ENCODE measurements at regions of chr16 and their contacts with region 1.

Region 1: GRCh38 chr16:89368604-89369249 is 121.6 kb downstream of the ANKRD11 start:
- DNase-seq: no peak
- H3K4me3 ChIP-seq: no peak overlapping the region
- H3K4me3 Mint-ChIP-seq: no peak overlapping the region
- H3K27ac Mint-ChIP-seq: peak overlapping the region; percentile 42
- H3K4me1 ChIP-seq: peaks cover 46% of the 10 kb centered on the region
- H3K4me1 Mint-ChIP-seq: peaks cover 70% of the 10 kb centered on the region
- H3K27me3 ChIP-seq: no peaks in the 10 kb centered on the region
- H3K27me3 Mint-ChIP-seq: no peaks in the 10 kb centered on the region
- CTCF ChIP-seq: no peak

Region 2: GRCh38 chr16:89357055-89357816 is 11.5 kb before region 1 on chr16:
- CTCF ChIA-PET with region 1: no interaction called
- POLR2A ChIA-PET with region 1: interaction called, 11 read pairs
- intact Hi-C with region 1: no loop called
- DNase-seq: peak in 1 of 2 experiments; percentile 39
- H3K4me3 ChIP-seq: no peak overlapping the region
- H3K4me3 Mint-ChIP-seq: no peak overlapping the region
- H3K27ac Mint-ChIP-seq: no peak overlapping the region
- H3K4me1 ChIP-seq: peaks cover 43% of the 10 kb centered on the region
- H3K4me1 Mint-ChIP-seq: peaks cover 52% of the 10 kb centered on the region
- H3K27me3 ChIP-seq: no peaks in the 10 kb centered on the region
- H3K27me3 Mint-ChIP-seq: no peaks in the 10 kb centered on the region
- CTCF ChIP-seq: peak in 1 of 2 experiments; percentile 46

Region 3: GRCh38 chr16:89422905-89423630 is 54.3 kb after region 1 on chr16:
- CTCF ChIA-PET with region 1: no interaction called
- POLR2A ChIA-PET with region 1: no interaction called
- intact Hi-C with region 1: no loop called
- DNase-seq: no peak
- H3K4me3 ChIP-seq: no peak overlapping the region
- H3K4me3 Mint-ChIP-seq: no peak overlapping the region
- H3K27ac Mint-ChIP-seq: peak overlapping the region; percentile 61
- H3K4me1 ChIP-seq: peaks cover 18% of the 10 kb centered on the region
- H3K4me1 Mint-ChIP-seq: peaks cover 21% of the 10 kb centered on the region
- H3K27me3 ChIP-seq: no peaks in the 10 kb centered on the region
- H3K27me3 Mint-ChIP-seq: no peaks in the 10 kb centered on the region
- CTCF ChIP-seq: no peak

Region 4: GRCh38 chr16:90008708-90009535 is 640.2 kb after region 1 on chr16:
- CTCF ChIA-PET with region 1: no interaction called
- POLR2A ChIA-PET with region 1: no interaction called
- intact Hi-C with region 1: no loop called
- DNase-seq: no peak
- H3K4me3 ChIP-seq: no peak overlapping the region
- H3K4me3 Mint-ChIP-seq: no peak overlapping the region
- H3K27ac Mint-ChIP-seq: no peak overlapping the region
- H3K4me1 ChIP-seq: 0 out of 2 replicates have a peak, but pooled peaks cover 7% of the 10 kb centered on the region
- H3K4me1 Mint-ChIP-seq: no peaks in the 10 kb centered on the region
- H3K27me3 ChIP-seq: no peaks in the 10 kb centered on the region
- H3K27me3 Mint-ChIP-seq: no peaks in the 10 kb centered on the region
- CTCF ChIP-seq: no peak